ENCODE measurements at regions of chr7 and their contacts with region 1.

Region 1: GRCh38 chr7:116576350-116577319 is 51.8 kb downstream of the CAV1 start:
- DNase-seq: no peak
- ATAC-seq: peak; percentile 58

Region 2: GRCh38 chr7:116464375-116464774 is 112.3 kb before region 1 on chr7:
- intact Hi-C with region 1: no loop called
- DNase-seq: no peak
- ATAC-seq: no peak

Region 3: DNA sequence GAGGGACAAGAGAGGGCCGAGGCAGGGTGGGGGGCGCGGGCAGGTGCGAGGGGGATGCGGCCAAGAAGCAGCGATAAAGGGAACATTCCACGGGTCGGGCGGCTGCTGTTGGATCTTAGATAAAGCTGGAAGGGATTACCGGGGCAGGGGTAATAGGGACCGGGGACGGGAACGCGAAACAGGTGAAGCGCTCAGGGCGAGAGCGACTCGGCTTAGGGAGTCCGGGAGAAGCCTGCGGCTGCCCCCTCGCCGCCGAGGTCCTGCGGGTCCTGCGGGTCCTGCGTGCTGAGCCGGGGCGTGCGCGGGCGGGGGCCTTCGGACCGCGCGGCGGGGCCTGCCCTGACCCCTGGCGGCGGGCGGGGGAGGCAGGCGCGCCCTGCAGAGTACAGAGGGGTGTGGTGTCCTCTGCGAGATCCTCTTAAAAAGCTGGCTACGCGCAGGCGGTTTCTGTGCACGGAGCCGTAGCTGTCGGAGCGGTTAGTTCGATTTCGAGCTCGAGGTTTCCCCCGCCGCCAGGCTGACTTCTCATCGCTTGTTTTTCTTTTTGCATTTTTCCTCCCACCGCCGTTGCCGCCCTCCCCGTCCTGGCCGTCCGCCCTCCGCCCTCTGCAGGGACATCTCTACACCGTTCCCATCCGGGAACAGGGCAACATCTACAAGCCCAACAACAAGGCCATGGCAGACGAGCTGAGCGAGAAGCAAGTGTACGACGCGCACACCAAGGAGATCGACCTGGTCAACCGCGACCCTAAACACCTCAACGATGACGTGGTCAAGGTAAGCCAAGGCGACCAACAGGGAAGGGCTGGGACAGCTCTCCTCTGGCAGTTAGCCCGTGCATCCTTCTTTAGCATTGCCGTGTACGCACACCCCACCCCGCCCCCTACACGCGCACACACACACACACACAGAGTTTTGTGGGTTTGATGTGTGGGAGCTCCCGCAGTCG is 50.4 kb before region 1 on chr7:
- intact Hi-C with region 1: loop called (anchors 5 kb)
- DNase-seq: peak; percentile 88
- ATAC-seq: peak; percentile 86

Region 4: DNA sequence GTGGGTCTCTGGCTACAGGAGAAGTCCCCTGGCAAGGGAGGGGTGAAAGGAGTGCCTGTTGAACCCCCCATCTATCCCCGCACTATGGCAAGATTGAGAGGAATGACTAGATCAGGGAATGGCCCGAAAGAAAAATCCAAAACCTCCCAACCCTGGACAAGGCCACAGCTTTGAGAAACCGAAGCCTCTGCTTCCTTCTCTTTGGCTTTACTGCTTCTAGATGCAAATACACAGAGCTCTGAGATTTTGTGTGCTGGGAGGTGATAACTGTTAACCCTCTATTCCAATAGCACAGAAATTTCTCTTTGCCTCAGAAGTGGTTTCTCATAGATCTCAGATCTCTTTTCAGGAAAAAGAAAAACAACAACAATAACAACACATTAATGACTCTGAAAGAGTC is 36.8 kb before region 1 on chr7:
- intact Hi-C with region 1: no loop called
- DNase-seq: no peak
- ATAC-seq: no peak

Region 5: GRCh38 chr7:116957874-116958273 is 381.2 kb after region 1 on chr7:
- intact Hi-C with region 1: no loop called
- DNase-seq: no peak
- ATAC-seq: no peak